Activated CD4-positive, alpha-beta memory T cell treated with anti-CD3 and anti-CD28 coated beads for 36 hours (primary cell): ENCODE measurements at regions of chr3 and their contacts with region 1.

Region 1: GRCh38 chr3:141553055-141553454 is 66.2 kb downstream of the RASA2 start:
- DNase-seq: no peak
- H3K4me3 Mint-ChIP-seq: peak overlapping the region; percentile 2
- H3K27ac Mint-ChIP-seq: peak overlapping the region; percentile 84
- H3K4me1 Mint-ChIP-seq: peaks cover 59% of the 10 kb centered on the region
- H3K27me3 Mint-ChIP-seq: no peaks in the 10 kb centered on the region

Region 2: GRCh38 chr3:141303481-141304223 is 249.4 kb before region 1 on chr3:
- CTCF ChIA-PET with region 1: no interaction called
- POLR2A ChIA-PET with region 1: no interaction called
- intact Hi-C with region 1: loop called (anchors 2 kb)
- DNase-seq: peak; percentile 56
- H3K4me3 Mint-ChIP-seq: no peak overlapping the region
- H3K27ac Mint-ChIP-seq: no peak overlapping the region
- H3K4me1 Mint-ChIP-seq: peaks cover 44% of the 10 kb centered on the region
- H3K27me3 Mint-ChIP-seq: no peaks in the 10 kb centered on the region

Region 3: GRCh38 chr3:141412087-141412935 is 140.7 kb before region 1 on chr3:
- CTCF ChIA-PET with region 1: no interaction called
- POLR2A ChIA-PET with region 1: no interaction called
- intact Hi-C with region 1: loop called (anchors 2 kb)
- DNase-seq: peak; percentile 60
- H3K4me3 Mint-ChIP-seq: peak overlapping the region; percentile 70
- H3K27ac Mint-ChIP-seq: peak overlapping the region; percentile 92
- H3K4me1 Mint-ChIP-seq: peaks cover 87% of the 10 kb centered on the region
- H3K27me3 Mint-ChIP-seq: no peaks in the 10 kb centered on the region

Region 4: DNA sequence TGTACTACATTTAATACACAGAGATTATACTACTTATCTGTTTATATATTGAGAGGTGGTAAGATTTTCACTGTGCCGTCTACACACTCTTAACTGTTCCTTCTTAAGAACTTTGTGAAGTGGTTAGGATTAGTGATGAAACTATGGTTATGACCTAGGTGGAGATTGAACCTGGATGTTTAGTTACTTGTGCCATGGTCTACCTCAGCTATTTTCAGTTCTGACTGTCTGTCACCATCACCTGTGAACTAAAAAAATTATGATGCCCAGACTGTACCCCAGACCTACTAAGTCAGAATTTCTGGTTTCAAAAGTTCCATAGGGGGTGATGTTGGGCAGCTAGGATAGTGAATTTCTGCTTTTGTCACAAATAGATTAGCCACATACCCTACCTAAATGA is 59.9 kb before region 1 on chr3:
- CTCF ChIA-PET with region 1: interaction called, 34 read pairs
- POLR2A ChIA-PET with region 1: interaction called, 61 read pairs
- intact Hi-C with region 1: no loop called
- DNase-seq: no peak
- H3K4me3 Mint-ChIP-seq: no peak overlapping the region
- H3K27ac Mint-ChIP-seq: peak overlapping the region; percentile 30
- H3K4me1 Mint-ChIP-seq: peaks cover 86% of the 10 kb centered on the region
- H3K27me3 Mint-ChIP-seq: no peaks in the 10 kb centered on the region

Region 5: GRCh38 chr3:141530133-141530768 is 22.8 kb before region 1 on chr3:
- CTCF ChIA-PET with region 1: interaction called, 3 read pairs
- POLR2A ChIA-PET with region 1: interaction called, 4 read pairs
- intact Hi-C with region 1: loop called (anchors 1 kb)
- DNase-seq: peak; percentile 40
- H3K4me3 Mint-ChIP-seq: no peak overlapping the region
- H3K27ac Mint-ChIP-seq: peak overlapping the region; percentile 56
- H3K4me1 Mint-ChIP-seq: peaks cover 70% of the 10 kb centered on the region
- H3K27me3 Mint-ChIP-seq: no peaks in the 10 kb centered on the region